OCI-LY7 (cell line): ENCODE measurements at regions of chr2 and their contacts with region 1.

Region 1: DNA sequence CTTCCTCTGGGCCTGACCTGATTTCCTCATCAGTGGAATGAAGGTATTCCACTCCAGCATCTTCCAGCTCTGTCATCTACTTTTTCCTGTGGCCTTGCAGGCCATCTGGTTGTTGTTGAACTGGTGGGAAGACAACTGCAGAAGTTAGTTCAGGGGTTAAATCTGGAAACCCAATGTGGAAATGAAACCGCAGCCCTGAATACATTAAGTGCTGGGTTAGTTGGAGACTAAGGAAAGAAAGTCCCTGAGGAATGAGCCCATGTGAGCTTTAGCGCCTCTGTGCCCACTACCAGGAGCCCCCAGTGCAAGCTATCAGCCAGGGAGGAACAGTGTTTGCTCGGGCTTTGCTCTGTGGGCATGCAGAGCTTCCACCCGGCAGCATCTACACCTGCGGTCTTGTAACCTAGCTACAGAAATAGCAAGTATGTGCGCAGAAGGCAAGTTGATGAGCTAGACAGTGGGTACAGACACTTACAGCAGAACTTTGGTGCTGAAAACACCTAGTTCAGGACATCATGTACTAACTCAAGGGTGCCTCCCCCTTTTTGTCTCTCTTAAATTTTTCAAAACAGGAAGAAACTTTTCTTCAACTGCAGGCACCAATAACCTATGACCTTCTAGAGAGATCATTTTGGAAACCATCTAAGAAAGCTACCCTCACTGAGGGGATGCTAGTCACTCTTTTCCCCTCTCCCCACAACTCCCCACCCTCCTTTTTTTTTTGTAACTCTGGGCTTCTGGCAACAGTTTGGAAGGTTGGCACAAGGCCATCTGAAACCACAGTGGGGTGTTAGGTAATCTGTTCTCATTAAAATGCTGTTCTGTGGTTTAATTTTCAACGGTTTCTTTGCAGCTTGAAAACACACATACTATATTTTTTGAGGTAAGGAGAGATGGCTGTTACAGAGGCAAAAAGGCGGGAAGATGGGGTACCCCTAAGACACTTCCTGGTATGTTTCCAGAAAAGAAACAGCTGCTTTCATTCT is 18.3 kb upstream of the CXCR4 start:
- DNase-seq: peak; percentile 93
- H3K4me3 ChIP-seq: peak overlapping the region; percentile 31
- H3K27ac ChIP-seq: peak overlapping the region; percentile 98
- H3K4me1 ChIP-seq: peaks cover 98% of the 10 kb centered on the region
- CTCF ChIP-seq: no peak

Region 2: DNA sequence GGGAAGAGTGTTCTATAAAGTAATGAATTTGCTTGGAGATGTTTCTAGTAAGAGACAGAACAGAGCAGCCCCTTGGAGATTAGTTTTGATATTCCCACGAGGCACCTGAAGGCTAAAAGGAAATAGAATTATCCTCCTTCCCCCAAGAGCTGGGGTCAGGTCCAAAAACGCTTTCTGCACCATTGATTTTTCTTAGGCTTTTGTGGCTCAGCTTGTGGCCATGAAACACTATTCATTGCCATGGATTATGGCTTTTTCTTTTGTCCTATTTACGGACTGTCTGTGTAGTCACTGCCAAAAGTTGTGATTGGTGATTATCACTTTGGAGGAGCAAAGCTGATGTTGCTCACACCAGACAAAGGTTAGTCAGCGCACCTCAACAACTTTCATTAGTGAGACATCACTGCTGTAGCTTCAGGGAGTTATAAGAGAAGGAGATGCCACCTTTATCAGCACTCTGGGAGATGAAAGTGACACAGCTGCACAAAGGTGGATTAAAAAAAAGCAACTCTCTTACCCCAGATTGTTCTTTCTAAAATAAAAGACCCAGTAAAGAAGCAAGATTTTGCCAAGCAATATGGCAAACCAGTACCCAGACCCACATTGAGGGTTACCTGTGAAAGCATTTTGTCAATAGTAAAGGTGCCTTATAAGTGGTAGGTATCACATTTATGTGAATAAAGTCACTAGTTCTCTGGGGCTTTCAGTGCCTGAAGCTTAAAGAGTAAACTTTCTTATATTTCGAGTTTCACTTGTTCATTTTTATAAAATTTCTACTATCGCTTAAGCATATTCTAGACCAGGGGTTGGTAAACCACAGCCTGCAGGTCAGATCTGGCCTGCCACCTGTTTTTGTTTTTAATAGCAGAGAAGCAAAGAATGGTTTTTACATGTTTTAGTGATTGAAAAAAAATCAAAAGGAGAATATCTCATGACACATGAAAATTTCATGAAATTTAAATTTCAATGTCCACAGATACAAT is 28.9 kb before region 1 on chr2:
- CTCF ChIA-PET with region 1: no interaction called
- POLR2A ChIA-PET with region 1: interaction called, 27 read pairs
- intact Hi-C with region 1: no loop called
- DNase-seq: no peak
- H3K4me3 ChIP-seq: peak overlapping the region; percentile 15
- H3K27ac ChIP-seq: peak overlapping the region; percentile 32
- H3K4me1 ChIP-seq: peaks cover 65% of the 10 kb centered on the region
- CTCF ChIP-seq: no peak; the same call in 1 of the 2 replicates

Region 3: GRCh38 chr2:136149011-136149410 is 12.8 kb after region 1 on chr2:
- CTCF ChIA-PET with region 1: interaction called, 3 read pairs
- POLR2A ChIA-PET with region 1: interaction called, 18 read pairs
- intact Hi-C with region 1: no loop called
- DNase-seq: no peak
- H3K4me3 ChIP-seq: no peak overlapping the region
- H3K27ac ChIP-seq: no peak overlapping the region
- H3K4me1 ChIP-seq: peaks cover 17% of the 10 kb centered on the region
- CTCF ChIP-seq: no peak

Region 4: DNA sequence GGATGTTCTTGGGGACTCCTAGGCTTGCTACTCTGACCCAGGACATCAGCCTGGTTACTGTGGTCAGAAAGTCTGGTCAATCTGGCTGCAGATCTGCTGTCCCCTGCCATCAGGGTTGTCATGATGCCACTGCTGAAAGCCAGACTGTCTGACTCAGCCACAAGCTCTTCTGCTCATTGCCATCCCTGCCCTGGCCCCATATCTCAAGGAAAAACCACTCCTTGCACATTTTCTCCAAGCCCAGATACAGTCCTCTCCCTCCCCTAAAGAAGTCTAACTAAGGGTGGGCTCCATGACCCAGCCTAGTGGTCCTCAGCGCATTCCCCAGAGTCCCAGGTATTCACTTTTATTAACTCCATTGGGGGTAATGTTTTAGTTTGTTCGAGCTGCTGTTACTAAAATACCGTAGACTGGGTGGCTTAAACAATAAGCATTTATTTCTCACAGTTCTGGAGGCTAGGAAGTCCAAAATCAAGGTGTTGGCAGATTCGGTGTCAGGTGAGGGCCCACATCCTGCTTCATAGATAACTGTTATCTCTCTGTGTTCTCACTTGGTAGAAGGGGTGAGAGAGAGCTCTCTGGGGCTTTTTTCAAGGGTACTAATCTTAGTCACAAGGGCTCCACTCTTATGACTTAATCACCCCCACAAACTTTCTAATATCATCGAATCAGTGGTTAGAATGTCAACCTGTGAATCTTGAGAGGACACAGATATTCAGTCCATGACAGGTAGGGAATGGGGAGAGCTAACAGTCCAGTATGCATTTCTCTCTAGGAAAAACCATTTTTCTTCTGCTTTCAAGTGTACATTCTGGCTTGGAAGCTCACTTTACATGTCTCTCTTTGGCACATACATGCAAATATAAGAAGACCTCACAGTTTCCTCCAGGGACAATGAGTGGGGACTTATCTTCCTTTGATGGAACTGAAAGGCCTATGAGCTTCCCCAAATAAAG is 76.5 kb after region 1 on chr2:
- CTCF ChIA-PET with region 1: interaction called, 14 read pairs
- POLR2A ChIA-PET with region 1: interaction called, 53 read pairs
- intact Hi-C with region 1: no loop called
- DNase-seq: peak; percentile 79
- H3K4me3 ChIP-seq: peak overlapping the region; percentile 4
- H3K27ac ChIP-seq: peak overlapping the region; percentile 41
- H3K4me1 ChIP-seq: peaks cover 69% of the 10 kb centered on the region
- CTCF ChIP-seq: no peak

Region 5: GRCh38 chr2:136255648-136256463 is 119.6 kb after region 1 on chr2:
- CTCF ChIA-PET with region 1: no interaction called
- POLR2A ChIA-PET with region 1: interaction called, 56 read pairs
- intact Hi-C with region 1: loop called (anchors 1 kb)
- DNase-seq: peak; percentile 85
- H3K4me3 ChIP-seq: peak overlapping the region; percentile 26
- H3K27ac ChIP-seq: peak overlapping the region; percentile 79
- H3K4me1 ChIP-seq: peaks cover 72% of the 10 kb centered on the region
- CTCF ChIP-seq: peak; percentile 80

Region 6: GRCh38 chr2:136378712-136379595 is 242.7 kb after region 1 on chr2:
- CTCF ChIA-PET with region 1: interaction called, 13 read pairs
- POLR2A ChIA-PET with region 1: interaction called, 21 read pairs
- intact Hi-C with region 1: loop called (anchors 1 kb)
- DNase-seq: peak; percentile 91
- H3K4me3 ChIP-seq: no peak overlapping the region
- H3K27ac ChIP-seq: peak overlapping the region; percentile 48
- H3K4me1 ChIP-seq: peaks cover 90% of the 10 kb centered on the region
- CTCF ChIP-seq: peak; percentile 99

Region 7: GRCh38 chr2:136394136-136395060 is 258.2 kb after region 1 on chr2:
- CTCF ChIA-PET with region 1: no interaction called
- POLR2A ChIA-PET with region 1: interaction called, 17 read pairs
- intact Hi-C with region 1: no loop called
- DNase-seq: peak; percentile 89
- H3K4me3 ChIP-seq: peak overlapping the region; percentile 11
- H3K27ac ChIP-seq: peak overlapping the region; percentile 98
- H3K4me1 ChIP-seq: peaks cover 94% of the 10 kb centered on the region
- CTCF ChIP-seq: no peak

Region 8: GRCh38 chr2:136653861-136654260 is 517.6 kb after region 1 on chr2:
- CTCF ChIA-PET with region 1: no interaction called
- POLR2A ChIA-PET with region 1: no interaction called
- intact Hi-C with region 1: no loop called
- DNase-seq: no peak
- H3K4me3 ChIP-seq: no peak overlapping the region
- H3K27ac ChIP-seq: no peak overlapping the region
- H3K4me1 ChIP-seq: no peaks in the 10 kb centered on the region
- CTCF ChIP-seq: no peak